ENCODE measurements at regions of chr10 and their contacts with region 1.

Region 1: GRCh38 chr10:43396928-43397624 is 11.9 kb downstream of the HNRNPF start:
- DNase-seq: peak; percentile 87
- H3K27ac ChIP-seq: peak overlapping the region; percentile 98
- CTCF ChIP-seq: no peak

Region 2: DNA sequence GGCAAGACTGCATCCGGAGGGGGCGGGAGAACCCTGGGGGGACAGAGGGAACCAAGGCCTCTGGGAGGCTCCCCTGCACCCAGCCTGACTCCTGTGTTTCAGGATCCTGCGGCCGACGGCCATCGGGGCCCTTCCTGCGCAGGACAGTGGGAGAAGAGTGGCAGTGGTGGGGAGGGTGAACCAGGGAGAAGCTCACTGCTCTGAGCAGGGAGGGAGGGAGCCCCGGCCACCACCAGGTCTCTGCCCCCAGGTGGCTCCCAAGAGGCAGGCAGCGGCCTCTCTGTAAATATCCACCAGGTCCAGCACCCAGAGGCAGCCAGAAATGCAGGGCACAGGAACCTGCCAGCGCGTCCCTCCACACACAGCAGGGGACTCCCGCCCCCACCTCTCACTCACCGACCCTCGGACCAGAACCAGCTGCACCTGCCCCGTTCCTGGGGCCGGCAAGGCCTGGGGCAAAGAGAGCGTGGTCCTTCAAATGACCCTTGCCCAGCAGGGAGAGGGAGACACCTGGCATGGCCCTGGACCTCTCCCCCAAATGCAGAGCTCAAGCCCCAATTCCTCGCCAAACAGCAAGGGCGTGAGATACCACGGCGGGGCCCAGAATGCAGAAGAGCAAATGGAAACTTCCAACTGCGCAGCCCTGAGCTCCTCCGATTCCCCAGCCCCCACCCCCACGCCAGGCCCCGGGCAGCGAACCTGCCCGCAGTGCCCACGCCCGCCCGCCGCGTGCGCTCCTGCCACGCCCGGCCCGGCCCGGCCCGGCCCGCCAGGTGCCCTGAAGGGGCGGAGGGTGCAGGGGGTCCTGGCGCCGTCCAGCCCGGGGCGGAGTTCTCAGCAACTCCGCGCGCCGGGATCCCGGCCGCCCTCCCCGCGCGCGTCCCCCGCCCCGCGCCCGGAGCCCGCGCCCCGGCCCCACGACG is 131.0 kb before region 1 on chr10:
- CTCF ChIA-PET with region 1: no interaction called
- POLR2A ChIA-PET with region 1: no interaction called
- DNase-seq: peak; percentile 53
- H3K27ac ChIP-seq: no peak overlapping the region
- CTCF ChIP-seq: no peak

Region 3: GRCh38 chr10:43436400-43437140 is 39.5 kb after region 1 on chr10 and contains the start of gene ZNF487:
- CTCF ChIA-PET with region 1: no interaction called
- POLR2A ChIA-PET with region 1: interaction called, 10 read pairs
- DNase-seq: peak; percentile 82
- H3K27ac ChIP-seq: peak within 1 kb of the TSS; percentile 97
- CTCF ChIP-seq: no peak